CD8-positive, alpha-beta T cell (primary cell): ENCODE measurements at regions of chr1 and their contacts with region 1.

Region 1: DNA sequence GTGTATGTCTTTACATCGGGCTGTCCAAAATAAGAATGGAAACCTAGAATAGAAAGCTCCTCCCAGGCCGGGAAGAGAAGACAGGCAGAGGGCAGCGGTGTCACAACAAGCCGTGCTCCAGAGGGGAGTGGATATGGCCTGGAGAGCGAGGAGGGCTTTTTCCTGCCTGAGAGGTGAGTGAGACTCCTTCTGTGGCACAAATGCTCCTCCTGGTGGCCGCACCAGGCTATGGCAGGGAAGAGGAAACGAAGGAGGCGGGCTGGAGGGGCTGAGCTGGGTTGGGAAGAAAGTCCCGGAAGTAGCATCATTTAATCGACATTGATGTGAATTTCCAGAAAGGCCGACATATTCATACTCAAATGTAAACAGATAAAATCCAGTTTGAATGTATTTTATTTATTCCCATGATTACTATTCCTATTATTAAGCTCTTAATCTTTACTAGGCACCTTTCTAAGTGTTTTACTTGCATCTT is 54.7 kb downstream of the MEF2D start:
- DNase-seq: peak; percentile 51 to 87 (median 80)
- ATAC-seq: peak; percentile 93
- H3K4me3 ChIP-seq: no peak overlapping the region
- H3K4me3 Mint-ChIP-seq: no peak overlapping the region
- H3K27ac ChIP-seq: no peak overlapping the region
- H3K27ac Mint-ChIP-seq: no peak overlapping the region
- H3K4me1 ChIP-seq: peaks cover 4% of the 10 kb centered on the region
- H3K4me1 Mint-ChIP-seq: peaks cover 5% of the 10 kb centered on the region
- H3K27me3 ChIP-seq: peaks cover 13 to 20% of the 10 kb centered on the region in 2 experiments
- H3K27me3 Mint-ChIP-seq: peaks cover 56% of the 10 kb centered on the region
- CTCF ChIP-seq: peak; percentile 94

Region 2: DNA sequence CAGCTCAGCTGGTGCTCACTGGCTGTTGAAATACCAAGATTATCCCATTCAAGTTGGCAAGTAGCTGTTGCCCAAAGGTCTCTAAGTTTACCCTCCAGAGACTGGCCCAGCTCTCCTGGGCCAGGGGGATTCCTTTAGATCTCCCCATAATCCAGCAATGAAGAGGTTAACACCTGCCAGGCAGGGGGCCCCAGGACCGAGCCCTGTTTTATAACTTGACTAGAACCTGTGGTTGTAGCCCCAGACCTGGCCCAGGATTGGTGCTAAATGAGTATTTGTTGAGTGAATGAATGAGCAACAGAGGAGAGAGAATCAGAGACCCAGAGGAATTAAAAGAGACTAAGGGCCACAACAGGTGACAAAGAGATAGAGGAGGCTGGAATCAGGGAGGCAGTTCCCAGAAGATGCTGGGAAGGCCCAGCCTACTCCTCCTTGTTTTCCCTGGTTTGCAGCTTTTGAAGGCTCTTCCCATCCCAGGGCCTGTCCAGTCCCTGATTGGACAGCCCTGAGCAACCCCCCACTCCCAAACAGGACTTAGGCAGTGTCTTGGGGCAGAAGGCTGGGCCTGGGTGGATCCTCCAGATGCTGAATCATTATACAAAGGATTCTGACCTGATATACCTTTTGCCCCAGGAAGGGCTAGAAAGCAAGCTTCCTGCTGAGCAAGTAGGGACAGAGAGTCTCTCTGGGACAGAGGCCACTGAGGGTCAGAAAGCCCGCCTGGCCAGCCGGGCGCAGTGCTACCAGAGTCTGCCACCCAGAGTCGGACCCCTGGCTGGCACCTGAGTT is 79.3 kb before region 1 on chr1:
- CTCF ChIA-PET with region 1: interaction called, 10 read pairs
- POLR2A ChIA-PET with region 1: no interaction called
- intact Hi-C with region 1: no loop called
- DNase-seq: no peak
- ATAC-seq: no peak
- H3K4me3 ChIP-seq: no peak overlapping the region
- H3K4me3 Mint-ChIP-seq: no peak overlapping the region
- H3K27ac ChIP-seq: no peak overlapping the region
- H3K27ac Mint-ChIP-seq: no peak overlapping the region
- H3K4me1 ChIP-seq: no peaks in the 10 kb centered on the region
- H3K4me1 Mint-ChIP-seq: peaks cover 5% of the 10 kb centered on the region
- H3K27me3 ChIP-seq: peaks cover 5 to 7% of the 10 kb centered on the region in 2 experiments
- H3K27me3 Mint-ChIP-seq: peaks cover 37% of the 10 kb centered on the region
- CTCF ChIP-seq: no peak

Region 3: DNA sequence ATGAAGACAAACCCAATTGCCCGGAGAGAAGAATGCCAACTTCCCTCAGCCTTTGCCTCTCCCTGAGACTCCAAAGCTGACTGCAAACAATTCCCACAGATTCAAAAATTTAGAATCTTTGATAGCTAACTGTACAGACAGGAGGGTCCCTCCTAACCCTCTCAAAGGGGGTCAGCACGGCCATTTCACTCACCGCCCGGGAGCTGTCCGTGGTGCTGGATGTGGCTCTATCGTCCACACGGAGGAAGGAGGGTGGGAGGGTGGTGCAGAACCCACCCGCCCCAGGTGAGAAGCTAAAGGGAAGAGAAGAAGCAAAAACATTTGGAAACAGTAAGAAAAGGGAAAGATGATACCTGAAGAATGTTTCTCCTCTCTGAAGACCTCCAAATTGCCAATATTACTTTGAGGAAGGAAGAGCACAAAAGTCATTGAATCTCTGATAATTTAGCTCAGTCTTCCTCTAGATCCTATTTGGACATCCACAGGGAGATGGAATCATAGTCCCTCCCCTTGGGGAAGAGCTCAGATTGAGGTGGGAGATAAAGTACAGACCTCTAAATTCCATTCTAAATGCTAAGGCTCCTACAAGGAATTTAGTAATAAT is 31.3 kb before region 1 on chr1:
- CTCF ChIA-PET with region 1: interaction called, 34 read pairs
- POLR2A ChIA-PET with region 1: no interaction called
- intact Hi-C with region 1: no loop called
- DNase-seq: no peak
- ATAC-seq: no peak
- H3K4me3 ChIP-seq: no peak overlapping the region
- H3K4me3 Mint-ChIP-seq: no peak overlapping the region
- H3K27ac ChIP-seq: no peak overlapping the region
- H3K27ac Mint-ChIP-seq: no peak overlapping the region
- H3K4me1 ChIP-seq: peaks cover 2% of the 10 kb centered on the region
- H3K4me1 Mint-ChIP-seq: peaks cover 3% of the 10 kb centered on the region
- H3K27me3 ChIP-seq: peaks cover 5 to 13% of the 10 kb centered on the region in 2 experiments
- H3K27me3 Mint-ChIP-seq: peaks cover 65% of the 10 kb centered on the region
- CTCF ChIP-seq: no peak

Region 4: GRCh38 chr1:156435545-156436141 is 10.2 kb before region 1 on chr1:
- CTCF ChIA-PET with region 1: interaction called, 37 read pairs
- POLR2A ChIA-PET with region 1: interaction called, 3 read pairs
- intact Hi-C with region 1: no loop called
- DNase-seq: peak in 3 of 9 experiments; percentile 24 to 51 (median 33)
- ATAC-seq: peak; percentile 27
- H3K4me3 ChIP-seq: peak overlapping the region; percentile 31 to 34
- H3K4me3 Mint-ChIP-seq: peak overlapping the region; percentile 82
- H3K27ac ChIP-seq: no peak overlapping the region
- H3K27ac Mint-ChIP-seq: no peak overlapping the region
- H3K4me1 ChIP-seq: peaks cover 33% of the 10 kb centered on the region
- H3K4me1 Mint-ChIP-seq: peaks cover 29% of the 10 kb centered on the region
- H3K27me3 ChIP-seq: peaks cover 62 to 75% of the 10 kb centered on the region in 2 experiments
- H3K27me3 Mint-ChIP-seq: peaks cover 79% of the 10 kb centered on the region
- CTCF ChIP-seq: no peak

Region 5: GRCh38 chr1:156480411-156481192 is 34.8 kb after region 1 on chr1:
- CTCF ChIA-PET with region 1: interaction called, 10 read pairs
- POLR2A ChIA-PET with region 1: no interaction called
- intact Hi-C with region 1: no loop called
- DNase-seq: peak; percentile 55 to 89 (median 85)
- ATAC-seq: peak; percentile 87
- H3K4me3 ChIP-seq: no peak overlapping the region
- H3K4me3 Mint-ChIP-seq: no peak overlapping the region
- H3K27ac ChIP-seq: peak overlapping the region; percentile 22 to 52
- H3K27ac Mint-ChIP-seq: peak overlapping the region; percentile 89
- H3K4me1 ChIP-seq: peaks cover 22% of the 10 kb centered on the region
- H3K4me1 Mint-ChIP-seq: peaks cover 47% of the 10 kb centered on the region
- H3K27me3 ChIP-seq: no peaks in the 10 kb centered on the region
- H3K27me3 Mint-ChIP-seq: no peaks in the 10 kb centered on the region
- CTCF ChIP-seq: peak; percentile 79

Region 6: GRCh38 chr1:156608036-156608674 is 162.3 kb after region 1 on chr1:
- CTCF ChIA-PET with region 1: interaction called, 16 read pairs
- POLR2A ChIA-PET with region 1: interaction called, 3 read pairs
- intact Hi-C with region 1: loop called in 1 of 2 experiments (anchors 2 kb)
- DNase-seq: peak; percentile 37 to 89 (median 65)
- ATAC-seq: peak; percentile 95
- H3K4me3 ChIP-seq: no peak overlapping the region
- H3K4me3 Mint-ChIP-seq: no peak overlapping the region
- H3K27ac ChIP-seq: no peak overlapping the region
- H3K27ac Mint-ChIP-seq: no peak overlapping the region
- H3K4me1 ChIP-seq: peaks cover 8% of the 10 kb centered on the region
- H3K4me1 Mint-ChIP-seq: peaks cover 11% of the 10 kb centered on the region
- H3K27me3 ChIP-seq: peaks cover 0 to 2% of the 10 kb centered on the region in 2 experiments
- H3K27me3 Mint-ChIP-seq: peaks cover 9% of the 10 kb centered on the region
- CTCF ChIP-seq: peak; percentile 88